ENCODE measurements at regions of chr20 and their contacts with region 1.

Region 1: DNA sequence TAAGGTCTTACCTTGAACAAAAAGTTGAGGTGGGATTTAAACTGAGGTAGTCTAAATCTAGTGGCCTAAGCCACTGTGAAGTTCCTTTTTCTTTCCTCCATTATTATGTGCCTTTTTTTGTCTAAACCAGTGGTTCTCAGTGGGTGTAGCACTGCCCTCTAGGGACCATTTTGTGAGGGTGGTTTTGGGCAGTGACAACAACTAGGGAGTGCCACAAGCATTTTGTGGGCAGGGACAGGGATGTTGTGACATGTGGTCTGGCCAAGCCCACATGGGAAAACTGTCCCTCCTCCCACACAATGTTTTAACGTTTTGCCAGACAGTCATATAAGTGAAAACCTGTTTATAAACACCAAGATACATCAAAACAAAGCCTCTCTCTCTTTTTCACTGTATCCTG is 899.4 kb upstream of the FLRT3 start:
- DNase-seq: peak; percentile 29 to 38
- H3K4me3 ChIP-seq: no peak overlapping the region
- H3K27ac ChIP-seq: no peak overlapping the region
- H3K4me1 ChIP-seq: no peaks in the 10 kb centered on the region
- H3K27me3 ChIP-seq: no peaks in the 10 kb centered on the region
- CTCF ChIP-seq: peak; percentile 61

Region 2: GRCh38 chr20:14142171-14142570 is 1094.6 kb before region 1 on chr20:
- CTCF ChIA-PET with region 1: no interaction called
- POLR2A ChIA-PET with region 1: no interaction called
- intact Hi-C with region 1: loop called (anchors 5 kb)
- DNase-seq: peak; percentile 40 to 50
- H3K4me3 ChIP-seq: no peak overlapping the region
- H3K27ac ChIP-seq: no peak overlapping the region
- H3K4me1 ChIP-seq: peaks cover 14% of the 10 kb centered on the region; the same call in 1 of the 2 replicates
- H3K27me3 ChIP-seq: no peaks in the 10 kb centered on the region
- CTCF ChIP-seq: peak; percentile 63